ENCODE measurements at regions of chr1 and their contacts with region 1.

Region 1: GRCh38 chr1:31605908-31606427 is 11.5 kb upstream of the HCRTR1 start:
- DNase-seq: peak; percentile 32
- H3K4me3 ChIP-seq: no peak overlapping the region
- H3K27ac ChIP-seq: no peak overlapping the region
- H3K4me1 ChIP-seq: no peaks in the 10 kb centered on the region
- H3K27me3 ChIP-seq: no peaks in the 10 kb centered on the region
- CTCF ChIP-seq: no peak

Region 2: GRCh38 chr1:31576201-31576669 is 29.7 kb before region 1 on chr1 and contains the start of gene TINAGL1:
- CTCF ChIA-PET with region 1: no interaction called
- dilution Hi-C with region 1: loop called (anchors 5 kb)
- in situ Hi-C with region 1: no loop called
- intact Hi-C with region 1: no loop called
- DNase-seq: peak; percentile 96
- H3K4me3 ChIP-seq: peak within 1 kb of the TSS; percentile 71 to 90 (median 83)
- H3K27ac ChIP-seq: peak within 1 kb of the TSS; percentile 68
- H3K4me1 ChIP-seq: peaks cover 64% of the 10 kb centered on the region
- H3K27me3 ChIP-seq: no peaks in the 10 kb centered on the region
- CTCF ChIP-seq: no peak
- total RNA-seq, gene TINAGL1: 433 to 840 TPM

Region 3: GRCh38 chr1:31704271-31705079 is 98.5 kb after region 1 on chr1:
- CTCF ChIA-PET with region 1: no interaction called
- dilution Hi-C with region 1: no loop called
- in situ Hi-C with region 1: no loop called
- intact Hi-C with region 1: no loop called
- DNase-seq: peak; percentile 40
- H3K4me3 ChIP-seq: peak overlapping the region; percentile 62 to 79 (median 77)
- H3K27ac ChIP-seq: peak overlapping the region; percentile 53
- H3K4me1 ChIP-seq: peaks cover 63% of the 10 kb centered on the region
- H3K27me3 ChIP-seq: no peaks in the 10 kb centered on the region
- CTCF ChIP-seq: no peak

Region 4: GRCh38 chr1:31714442-31715086 is 108.6 kb after region 1 on chr1:
- CTCF ChIA-PET with region 1: no interaction called
- dilution Hi-C with region 1: loop called (anchors 5 kb)
- in situ Hi-C with region 1: no loop called
- intact Hi-C with region 1: no loop called
- DNase-seq: no peak
- H3K4me3 ChIP-seq: no peak overlapping the region
- H3K27ac ChIP-seq: no peak overlapping the region
- H3K4me1 ChIP-seq: peaks cover 40% of the 10 kb centered on the region
- H3K27me3 ChIP-seq: no peaks in the 10 kb centered on the region
- CTCF ChIP-seq: no peak

Measured in mammary epithelial cell (primary cell).